CD8-positive, alpha-beta T cell (primary cell): ENCODE measurements at regions of chr7 and their contacts with region 1.

Region 1: GRCh38 chr7:140479062-140479738 is at the start of gene MKRN1:
- DNase-seq: peak; percentile 83 to 95 (median 93)
- ATAC-seq: peak; percentile 84
- H3K4me3 ChIP-seq: peak within 1 kb of the TSS; percentile 82 to 85
- H3K4me3 Mint-ChIP-seq: peak within 1 kb of the TSS; percentile 99
- H3K27ac ChIP-seq: peak within 1 kb of the TSS; percentile 69 to 81
- H3K27ac Mint-ChIP-seq: peak within 1 kb of the TSS; percentile 99
- H3K4me1 ChIP-seq: peaks cover 33% of the 10 kb centered on the region
- H3K4me1 Mint-ChIP-seq: peaks cover 27% of the 10 kb centered on the region
- H3K27me3 ChIP-seq: no peaks in the 10 kb centered on the region
- H3K27me3 Mint-ChIP-seq: no peaks in the 10 kb centered on the region
- CTCF ChIP-seq: no peak
- total RNA-seq, gene MKRN1: 146 to 148 TPM

Region 2: GRCh38 chr7:140230861-140231770 is 248.1 kb before region 1 on chr7:
- CTCF ChIA-PET with region 1: no interaction called
- POLR2A ChIA-PET with region 1: no interaction called
- intact Hi-C with region 1: loop called in 1 of 2 experiments (anchors 2 kb)
- DNase-seq: peak in 8 of 9 experiments; percentile 25 to 80 (median 62)
- ATAC-seq: peak; percentile 19
- H3K4me3 ChIP-seq: peak overlapping the region; percentile 73
- H3K4me3 Mint-ChIP-seq: peak overlapping the region; percentile 92
- H3K27ac ChIP-seq: peak overlapping the region; percentile 83 to 85
- H3K27ac Mint-ChIP-seq: peak overlapping the region; percentile 100
- H3K4me1 ChIP-seq: peaks cover 25% of the 10 kb centered on the region
- H3K4me1 Mint-ChIP-seq: peaks cover 40% of the 10 kb centered on the region
- H3K27me3 ChIP-seq: no peaks in the 10 kb centered on the region
- H3K27me3 Mint-ChIP-seq: no peaks in the 10 kb centered on the region
- CTCF ChIP-seq: no peak

Region 3: GRCh38 chr7:140463111-140463510 is 16.1 kb before region 1 on chr7:
- CTCF ChIA-PET with region 1: interaction called, 23 read pairs
- POLR2A ChIA-PET with region 1: interaction called, 5 read pairs
- intact Hi-C with region 1: no loop called
- DNase-seq: no peak
- ATAC-seq: no peak
- H3K4me3 ChIP-seq: no peak overlapping the region
- H3K4me3 Mint-ChIP-seq: no peak overlapping the region
- H3K27ac ChIP-seq: no peak overlapping the region
- H3K27ac Mint-ChIP-seq: no peak overlapping the region
- H3K4me1 ChIP-seq: no peaks in the 10 kb centered on the region
- H3K4me1 Mint-ChIP-seq: peaks cover 22% of the 10 kb centered on the region
- H3K27me3 ChIP-seq: no peaks in the 10 kb centered on the region
- H3K27me3 Mint-ChIP-seq: no peaks in the 10 kb centered on the region
- CTCF ChIP-seq: no peak

Region 4: GRCh38 chr7:140673063-140673773 is 194.0 kb after region 1 on chr7:
- CTCF ChIA-PET with region 1: interaction called, 3 read pairs
- POLR2A ChIA-PET with region 1: interaction called, 7 read pairs
- intact Hi-C with region 1: loop called (anchors 5 kb)
- DNase-seq: peak; percentile 30 to 79 (median 65)
- ATAC-seq: peak; percentile 77
- H3K4me3 ChIP-seq: peak overlapping the region; percentile 56 to 64
- H3K4me3 Mint-ChIP-seq: peak overlapping the region; percentile 88
- H3K27ac ChIP-seq: peak overlapping the region; percentile 68 to 80
- H3K27ac Mint-ChIP-seq: peak overlapping the region; percentile 93
- H3K4me1 ChIP-seq: peaks cover 22% of the 10 kb centered on the region
- H3K4me1 Mint-ChIP-seq: peaks cover 41% of the 10 kb centered on the region
- H3K27me3 ChIP-seq: no peaks in the 10 kb centered on the region
- H3K27me3 Mint-ChIP-seq: no peaks in the 10 kb centered on the region
- CTCF ChIP-seq: no peak

Region 5: DNA sequence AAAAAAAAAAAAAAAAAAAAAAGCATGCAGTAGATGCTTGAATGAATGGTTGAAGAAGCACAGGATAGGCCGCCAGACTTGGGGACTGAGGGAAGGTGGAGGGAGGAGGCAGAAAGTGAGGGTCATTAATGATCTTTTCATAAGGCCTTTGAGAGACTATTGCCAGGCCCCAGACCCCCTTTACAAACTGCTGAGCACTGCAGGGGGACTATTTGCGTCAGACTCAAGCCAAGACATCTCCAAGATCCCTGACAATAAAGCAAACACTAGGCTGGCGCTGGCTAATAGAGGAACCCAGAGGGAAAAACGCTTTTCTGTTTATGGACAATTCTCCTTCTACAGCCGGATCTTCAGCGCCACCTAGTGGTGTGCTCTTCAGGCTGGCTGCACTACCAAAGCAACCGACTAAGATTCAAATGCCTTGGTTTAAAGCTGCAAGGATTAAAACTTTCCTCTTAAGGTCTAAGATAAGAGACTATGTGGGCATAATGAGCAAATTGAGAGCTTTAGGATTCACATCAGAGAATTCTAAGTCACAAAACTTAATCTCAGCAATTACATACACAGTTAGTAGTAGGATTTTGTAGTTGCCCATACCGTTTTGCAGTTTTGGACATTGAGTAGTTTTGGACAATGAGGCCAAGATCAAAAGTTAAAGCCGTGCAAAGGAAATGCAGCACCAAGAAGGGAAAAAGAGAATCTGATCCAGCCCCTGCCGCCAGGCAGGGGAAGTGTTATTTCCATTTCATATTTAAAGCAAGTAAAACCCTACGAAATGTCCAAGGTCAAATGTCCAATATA is 1054.1 kb after region 1 on chr7:
- CTCF ChIA-PET with region 1: no interaction called
- POLR2A ChIA-PET with region 1: no interaction called
- intact Hi-C with region 1: loop called in 1 of 2 experiments (anchors 5 kb)
- DNase-seq: peak; percentile 19 to 80 (median 61)
- ATAC-seq: peak; percentile 56
- H3K4me3 ChIP-seq: no peak overlapping the region
- H3K4me3 Mint-ChIP-seq: no peak overlapping the region
- H3K27ac ChIP-seq: no peak overlapping the region
- H3K27ac Mint-ChIP-seq: no peak overlapping the region
- H3K4me1 ChIP-seq: no peaks in the 10 kb centered on the region
- H3K4me1 Mint-ChIP-seq: no peaks in the 10 kb centered on the region
- H3K27me3 ChIP-seq: no peaks in the 10 kb centered on the region
- H3K27me3 Mint-ChIP-seq: peaks cover 35% of the 10 kb centered on the region
- CTCF ChIP-seq: peak; percentile 90